ENCODE measurements at regions of chr11 and their contacts with region 1.

Region 1: GRCh38 chr11:117946842-117947526 is 17.8 kb upstream of the TMPRSS13 start:
- DNase-seq: peak; percentile 93
- H3K4me3 ChIP-seq: no peak overlapping the region
- H3K27ac ChIP-seq: no peak overlapping the region
- H3K4me1 ChIP-seq: peaks cover 0 to 8% (median 4%) of the 10 kb centered on the region in 4 donors
- H3K27me3 ChIP-seq: no peaks in the 10 kb centered on the region
- CTCF ChIP-seq: peak; percentile 95 to 98 (median 97)
- EP300 ChIP-seq: no peak
- POLR2A ChIP-seq: no peak

Region 2: GRCh38 chr11:117426269-117426685 is 520.7 kb before region 1 on chr11:
- intact Hi-C with region 1: loop called (anchors 5 kb)
- DNase-seq: peak; percentile 82
- H3K4me3 ChIP-seq: no peak overlapping the region
- H3K27ac ChIP-seq: no peak overlapping the region
- H3K4me1 ChIP-seq: peaks cover 0 to 7% (median 5%) of the 10 kb centered on the region in 4 donors
- H3K27me3 ChIP-seq: no peaks in the 10 kb centered on the region
- CTCF ChIP-seq: peak; percentile 84 to 98 (median 94)
- EP300 ChIP-seq: no peak
- POLR2A ChIP-seq: no peak

Region 3: GRCh38 chr11:117807482-117808327 is 139.3 kb before region 1 on chr11:
- intact Hi-C with region 1: loop called (anchors 1 kb)
- DNase-seq: peak; percentile 88
- H3K4me3 ChIP-seq: no peak overlapping the region
- H3K27ac ChIP-seq: no peak overlapping the region
- H3K4me1 ChIP-seq: no peaks in the 10 kb centered on the region
- H3K27me3 ChIP-seq: no peaks in the 10 kb centered on the region
- CTCF ChIP-seq: peak; percentile 72 to 92 (median 88)
- EP300 ChIP-seq: no peak
- POLR2A ChIP-seq: no peak

Region 4: DNA sequence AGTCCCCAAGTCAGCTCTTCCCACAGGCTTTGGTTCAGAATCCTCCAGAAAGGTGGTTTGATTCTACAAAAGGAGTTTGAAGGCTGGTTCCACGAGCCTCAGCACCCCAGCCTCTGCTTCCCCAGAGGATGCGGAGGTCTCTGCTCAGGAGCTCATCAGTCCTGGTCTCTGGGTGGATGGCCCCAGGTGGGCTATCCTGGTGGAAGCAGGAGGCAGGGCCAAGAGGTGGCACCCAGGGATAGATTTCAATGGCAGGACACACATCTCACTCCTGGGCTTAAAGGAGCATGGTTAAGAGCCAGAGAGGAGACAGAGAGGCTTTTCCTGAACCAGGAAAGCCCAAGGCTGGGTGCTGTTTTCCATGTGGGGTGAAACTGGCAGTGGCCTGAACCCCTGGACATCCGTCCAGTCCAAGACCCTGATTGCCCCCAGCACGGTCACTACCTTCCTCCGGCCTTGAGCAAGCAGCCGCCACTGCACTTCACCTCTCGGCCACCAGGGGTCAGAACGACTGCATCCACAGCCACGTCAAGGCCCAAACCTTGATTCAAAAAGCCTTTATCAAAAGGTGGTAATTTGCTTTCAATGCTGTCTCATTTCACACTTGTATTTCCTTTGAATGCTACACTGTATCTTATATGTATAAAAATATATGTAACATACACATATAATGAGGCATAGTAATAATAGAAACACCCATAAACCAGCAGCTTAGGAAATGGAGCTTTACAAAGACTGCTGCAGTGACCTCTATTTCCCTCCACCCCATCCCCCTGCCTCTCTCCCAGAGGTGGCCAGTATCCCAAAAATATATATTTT is 103.1 kb before region 1 on chr11:
- intact Hi-C with region 1: loop called (anchors 1 kb)
- DNase-seq: peak; percentile 88
- H3K4me3 ChIP-seq: no peak overlapping the region
- H3K27ac ChIP-seq: peak overlapping the region in 1 of 4 donors; percentile 13
- H3K4me1 ChIP-seq: peaks cover 0 to 28% (median 18%) of the 10 kb centered on the region in 4 donors
- H3K27me3 ChIP-seq: no peaks in the 10 kb centered on the region
- CTCF ChIP-seq: peak; percentile 97 to 99 (median 98)
- EP300 ChIP-seq: no peak
- POLR2A ChIP-seq: no peak

Region 5: DNA sequence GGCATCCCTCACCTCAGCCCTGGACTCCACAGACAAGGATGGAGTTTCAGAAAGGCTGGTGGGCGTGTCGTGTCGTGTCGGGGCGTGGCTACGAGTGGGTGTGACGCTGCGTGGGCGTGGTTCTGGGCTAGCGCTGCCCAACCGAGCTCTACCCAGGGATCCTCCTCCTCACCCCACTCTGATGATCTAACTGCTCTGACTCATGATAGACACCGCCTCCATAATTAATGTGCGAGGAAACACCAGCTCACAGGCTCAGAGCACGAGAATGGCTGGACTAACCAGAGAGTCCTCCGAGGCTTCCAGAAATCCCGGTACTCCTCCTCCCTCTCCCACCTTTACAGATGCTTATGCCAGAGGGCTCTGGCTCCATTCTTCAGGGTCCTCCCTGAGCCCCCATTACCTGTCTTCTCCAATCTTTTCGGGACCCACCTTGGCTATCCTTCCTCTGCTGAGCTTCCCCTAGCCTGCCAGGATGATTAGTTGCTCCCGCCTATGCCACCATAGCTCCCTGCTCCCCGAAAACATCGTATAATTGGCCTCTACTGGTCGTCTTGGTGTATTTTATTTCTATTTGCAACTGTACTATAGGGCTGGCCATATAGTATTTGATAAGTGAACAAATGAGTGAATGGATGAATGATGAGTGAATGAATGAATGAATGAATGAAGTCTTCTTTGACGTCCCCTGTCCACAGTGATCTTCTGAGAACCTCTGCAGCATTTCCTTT is 39.6 kb before region 1 on chr11:
- intact Hi-C with region 1: loop called (anchors 5 kb)
- DNase-seq: peak; percentile 92
- H3K4me3 ChIP-seq: peak overlapping the region in 1 of 4 donors; percentile 20
- H3K27ac ChIP-seq: peak overlapping the region in 2 of 4 donors; percentile 50
- H3K4me1 ChIP-seq: peaks cover 0 to 14% (median 10%) of the 10 kb centered on the region in 4 donors
- H3K27me3 ChIP-seq: no peaks in the 10 kb centered on the region
- CTCF ChIP-seq: no peak
- EP300 ChIP-seq: no peak
- POLR2A ChIP-seq: peak in 1 of 2 donors; percentile 23

Region 6: DNA sequence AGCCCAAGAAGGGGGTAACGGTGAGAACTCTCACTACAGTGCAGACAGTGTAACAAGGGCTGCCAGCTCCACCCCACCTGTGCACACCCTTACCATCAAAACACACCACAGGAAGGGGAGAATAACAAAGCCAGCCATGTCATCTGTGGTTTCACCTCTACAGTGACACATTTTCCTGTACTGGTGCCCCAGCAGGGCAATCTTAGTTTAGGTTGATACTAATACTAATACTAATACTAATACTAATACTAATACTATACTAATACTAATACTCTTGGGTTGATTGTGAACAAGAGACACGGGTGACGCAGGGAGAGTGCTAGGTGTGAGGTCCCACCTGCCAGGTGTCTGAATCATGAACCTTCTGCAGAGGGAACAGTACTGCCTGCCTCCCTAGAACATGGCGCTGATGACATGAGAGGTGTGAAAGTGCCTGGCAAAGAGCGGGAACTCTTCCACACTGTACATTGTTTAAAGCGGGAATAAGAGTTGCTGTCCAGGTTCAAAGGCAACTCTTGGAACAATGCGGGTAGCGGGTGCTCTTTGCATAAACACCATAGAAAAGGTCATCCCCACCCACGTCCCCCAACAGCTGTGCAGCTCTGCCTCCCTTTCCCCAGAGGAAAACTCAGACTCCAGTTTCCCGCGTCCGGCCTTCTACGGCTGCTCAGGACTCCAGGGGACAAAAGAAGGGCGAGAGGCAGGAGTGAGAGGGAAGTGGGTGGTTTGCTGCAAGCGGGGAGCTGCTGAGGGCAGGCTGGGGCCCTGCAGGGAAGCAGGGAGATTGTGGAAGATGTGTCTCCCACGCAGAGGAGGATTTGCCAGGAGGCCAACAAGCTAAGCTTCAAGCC is 104.9 kb after region 1 on chr11:
- intact Hi-C with region 1: loop called (anchors 5 kb)
- DNase-seq: no peak
- H3K4me3 ChIP-seq: no peak overlapping the region
- H3K27ac ChIP-seq: no peak overlapping the region
- H3K4me1 ChIP-seq: no peaks in the 10 kb centered on the region
- H3K27me3 ChIP-seq: no peaks in the 10 kb centered on the region
- CTCF ChIP-seq: no peak
- EP300 ChIP-seq: no peak
- POLR2A ChIP-seq: no peak

Measured in sigmoid colon (tissue), 7 donors.